GM12878 (cell line): ENCODE measurements at regions of chr15 and their contacts with region 1.

Region 1: GRCh38 chr15:78893538-78893937 is 20.8 kb downstream of the MORF4L1 start:
- DNase-seq: no peak
- ATAC-seq: peak; percentile 74
- H3K4me3 ChIP-seq: peak overlapping the region; percentile 2; the same call in 1 of the 2 replicates
- H3K27ac ChIP-seq: no peak overlapping the region
- H3K4me1 ChIP-seq: peaks cover 10% of the 10 kb centered on the region
- H3K27me3 ChIP-seq: no peaks in the 10 kb centered on the region
- CTCF ChIP-seq: no peak
- EP300 ChIP-seq: no peak
- POLR2A ChIP-seq: no peak
- RAD21 ChIP-seq: no peak

Region 2: GRCh38 chr15:78859971-78860732 is 33.4 kb before region 1 on chr15:
- CTCF ChIA-PET with region 1: interaction called, 4 read pairs
- POLR2A ChIA-PET with region 1: no interaction called
- RAD21 ChIA-PET with region 1: no interaction called
- SMC1A ChIA-PET with region 1: no interaction called
- in situ Hi-C with region 1: no loop called
- intact Hi-C with region 1: loop called (anchors 1 kb)
- DNase-seq: peak; percentile 44
- ATAC-seq: peak; percentile 95
- H3K4me3 ChIP-seq: peak overlapping the region; percentile 59
- H3K27ac ChIP-seq: no peak overlapping the region
- H3K4me1 ChIP-seq: peaks cover 3% of the 10 kb centered on the region; the same call in 1 of the 2 replicates
- H3K27me3 ChIP-seq: no peaks in the 10 kb centered on the region
- CTCF ChIP-seq: peak; percentile 50 to 56 (median 56); a peak in 5 of 6 replicates
- EP300 ChIP-seq: no peak; a peak in 1 of 4 replicates
- POLR2A ChIP-seq: no peak
- RAD21 ChIP-seq: peak; percentile 41; the same call in 1 of the 2 replicates

Region 3: DNA sequence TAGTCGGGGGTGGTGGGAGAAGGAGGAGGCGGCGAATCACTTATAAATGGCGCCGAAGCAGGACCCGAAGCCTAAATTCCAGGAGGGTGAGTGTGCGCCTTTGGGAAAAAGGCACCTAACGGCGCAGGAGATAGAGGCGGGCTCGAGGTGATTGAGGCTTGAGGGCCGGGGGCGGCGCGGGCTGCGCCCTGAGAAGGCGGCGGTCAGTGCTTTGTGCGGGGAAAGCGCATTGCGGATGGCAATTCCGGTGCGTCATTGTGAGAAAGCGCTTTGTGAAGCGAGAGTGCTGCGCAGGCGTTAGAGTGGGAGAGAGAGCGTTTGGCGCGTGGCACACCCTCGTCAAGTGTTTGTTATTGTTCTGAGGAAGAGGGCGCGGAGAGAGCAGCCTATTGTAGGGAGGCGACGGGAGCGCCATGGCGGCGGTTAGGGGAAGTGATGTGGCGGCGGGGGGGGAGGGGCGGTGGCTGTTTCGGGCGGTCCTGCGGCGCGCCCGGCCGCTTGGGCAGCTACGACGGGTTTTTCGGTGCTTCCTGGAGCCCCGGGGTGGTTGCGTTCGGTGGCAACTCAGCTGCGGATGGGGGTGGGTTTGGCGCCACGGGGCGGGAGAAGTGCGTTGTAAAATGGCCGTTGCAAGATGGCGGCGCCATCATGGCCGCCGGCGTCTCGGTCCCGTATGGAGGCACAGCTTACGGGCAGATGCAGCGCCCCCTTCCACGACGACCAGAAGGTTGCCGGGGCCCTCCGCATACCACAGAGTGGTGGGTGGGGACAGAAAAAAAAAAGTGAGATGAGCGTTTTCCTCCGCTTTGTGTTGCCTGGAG is 20.4 kb before region 1 on chr15:
- CTCF ChIA-PET with region 1: interaction called, 18 read pairs
- POLR2A ChIA-PET with region 1: interaction called, 21 read pairs
- RAD21 ChIA-PET with region 1: no interaction called
- SMC1A ChIA-PET with region 1: interaction called, 9 read pairs
- in situ Hi-C with region 1: no loop called
- intact Hi-C with region 1: no loop called
- DNase-seq: peak; percentile 53
- ATAC-seq: peak; percentile 83
- H3K4me3 ChIP-seq: peak overlapping the region; percentile 90
- H3K27ac ChIP-seq: peak overlapping the region; percentile 99
- H3K4me1 ChIP-seq: peaks cover 3% of the 10 kb centered on the region; the same call in 1 of the 2 replicates
- H3K27me3 ChIP-seq: no peaks in the 10 kb centered on the region
- CTCF ChIP-seq: peak; percentile 42 to 58 (median 54)
- EP300 ChIP-seq: no peak
- POLR2A ChIP-seq: peak; percentile 92
- RAD21 ChIP-seq: no peak

Region 4: GRCh38 chr15:78880242-78880533 is 13.3 kb before region 1 on chr15:
- CTCF ChIA-PET with region 1: interaction called, 10 read pairs
- POLR2A ChIA-PET with region 1: interaction called, 21 read pairs
- RAD21 ChIA-PET with region 1: no interaction called
- SMC1A ChIA-PET with region 1: interaction called, 14 read pairs
- in situ Hi-C with region 1: no loop called
- intact Hi-C with region 1: loop called (anchors 2 kb)
- DNase-seq: no peak
- ATAC-seq: no peak
- H3K4me3 ChIP-seq: no peak overlapping the region
- H3K27ac ChIP-seq: no peak overlapping the region
- H3K4me1 ChIP-seq: peaks cover 16% of the 10 kb centered on the region
- H3K27me3 ChIP-seq: no peaks in the 10 kb centered on the region
- CTCF ChIP-seq: no peak
- EP300 ChIP-seq: no peak
- POLR2A ChIP-seq: no peak
- RAD21 ChIP-seq: no peak

Region 5: GRCh38 chr15:78922527-78923414 is 29.2 kb after region 1 on chr15:
- CTCF ChIA-PET with region 1: interaction called, 3 read pairs
- POLR2A ChIA-PET with region 1: interaction called, 11 read pairs
- RAD21 ChIA-PET with region 1: no interaction called
- SMC1A ChIA-PET with region 1: no interaction called
- in situ Hi-C with region 1: no loop called
- intact Hi-C with region 1: no loop called
- DNase-seq: no peak
- ATAC-seq: no peak
- H3K4me3 ChIP-seq: no peak overlapping the region
- H3K27ac ChIP-seq: no peak overlapping the region
- H3K4me1 ChIP-seq: no peaks in the 10 kb centered on the region; the same call in 1 of the 2 replicates
- H3K27me3 ChIP-seq: no peaks in the 10 kb centered on the region
- CTCF ChIP-seq: no peak
- EP300 ChIP-seq: no peak
- POLR2A ChIP-seq: peak; percentile 31; the same call in 1 of the 2 replicates
- RAD21 ChIP-seq: no peak